Endothelial cell of umbilical vein (primary cell): ENCODE measurements at regions of chr3 and their contacts with region 1.

Region 1: GRCh38 chr3:46488735-46489361 is 8.9 kb upstream of the RTP3 start:
- DNase-seq: peak; percentile 84
- H3K4me3 ChIP-seq: no peak overlapping the region
- H3K27ac ChIP-seq: no peak overlapping the region
- H3K4me1 ChIP-seq: peaks cover 2% of the 10 kb centered on the region
- H3K27me3 ChIP-seq: peaks cover 2 to 7% of the 10 kb centered on the region in 2 experiments
- CTCF ChIP-seq: peak; percentile 99 to 100
- POLR2A ChIP-seq: no peak

Region 2: DNA sequence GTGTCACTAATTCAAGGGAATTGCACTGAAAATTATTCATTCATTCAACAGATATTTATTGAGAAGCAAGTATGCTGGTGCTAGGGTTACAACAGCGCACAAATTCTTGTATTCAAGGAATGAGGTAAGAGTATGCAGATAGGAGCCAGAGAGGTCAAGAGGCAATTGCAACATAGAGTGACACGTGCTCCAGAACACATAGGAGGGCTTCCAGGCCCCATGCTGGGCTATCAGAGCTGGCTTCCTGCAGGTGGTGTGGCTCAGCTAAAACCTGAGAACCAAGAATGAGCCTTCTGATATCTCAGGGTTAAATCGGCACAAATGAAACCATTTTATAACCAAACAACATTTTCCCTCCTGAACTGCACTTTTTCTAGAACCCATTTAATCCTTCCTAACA is 95.3 kb before region 1 on chr3:
- CTCF ChIA-PET with region 1: no interaction called
- POLR2A ChIA-PET with region 1: no interaction called
- dilution Hi-C with region 1: no loop called
- intact Hi-C with region 1: no loop called
- DNase-seq: no peak
- H3K4me3 ChIP-seq: no peak overlapping the region
- H3K27ac ChIP-seq: no peak overlapping the region
- H3K4me1 ChIP-seq: no peaks in the 10 kb centered on the region
- H3K27me3 ChIP-seq: no peaks in the 10 kb centered on the region
- CTCF ChIP-seq: no peak
- POLR2A ChIP-seq: no peak

Region 3: DNA sequence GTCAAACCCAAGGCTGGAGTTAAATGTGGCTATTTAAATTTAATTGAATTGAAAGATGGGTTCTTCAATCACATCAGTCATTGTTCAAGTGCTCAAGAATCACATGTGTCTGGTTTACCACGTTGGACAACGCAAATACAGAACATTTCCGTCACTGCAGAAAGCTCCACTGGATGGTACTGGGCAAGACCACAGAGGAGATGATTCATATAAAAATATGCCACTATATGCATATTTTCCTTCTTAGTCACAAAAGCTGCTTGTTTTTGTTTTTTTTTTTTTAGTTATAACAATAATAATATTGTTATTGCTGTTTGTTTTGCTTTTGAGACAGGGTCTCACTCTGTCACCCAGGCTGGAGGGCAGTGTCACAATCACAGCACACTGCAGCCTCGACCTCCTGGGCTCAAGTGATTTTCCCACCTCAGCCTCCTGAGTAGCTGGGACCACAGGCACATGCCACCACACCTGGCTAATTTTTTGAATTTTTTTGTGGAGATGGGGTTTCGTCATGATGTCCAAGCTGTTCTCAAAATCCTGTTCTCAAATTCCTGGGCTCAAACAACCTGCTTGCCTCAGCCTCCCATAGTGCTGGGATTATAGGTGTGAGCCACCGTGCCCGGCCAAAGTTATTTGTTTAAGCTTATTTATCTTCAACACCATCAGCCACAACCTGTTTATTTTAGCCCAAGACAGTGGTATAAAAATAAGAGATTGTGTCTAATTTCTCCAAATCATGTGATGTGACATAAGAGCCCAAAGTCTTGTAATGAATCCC is 28.4 kb after region 1 on chr3:
- CTCF ChIA-PET with region 1: interaction called, 52 read pairs
- POLR2A ChIA-PET with region 1: no interaction called
- dilution Hi-C with region 1: no loop called
- intact Hi-C with region 1: no loop called
- DNase-seq: peak; percentile 61
- H3K4me3 ChIP-seq: no peak overlapping the region
- H3K27ac ChIP-seq: peak overlapping the region; percentile 84
- H3K4me1 ChIP-seq: peaks cover 37% of the 10 kb centered on the region
- H3K27me3 ChIP-seq: no peaks in the 10 kb centered on the region
- CTCF ChIP-seq: no peak
- POLR2A ChIP-seq: no peak

Region 4: GRCh38 chr3:46558184-46559043 is 69.6 kb after region 1 on chr3:
- CTCF ChIA-PET with region 1: interaction called, 225 read pairs
- POLR2A ChIA-PET with region 1: interaction called, 5 read pairs
- dilution Hi-C with region 1: no loop called
- intact Hi-C with region 1: loop called (anchors 1 kb)
- DNase-seq: peak; percentile 84
- H3K4me3 ChIP-seq: peak overlapping the region; percentile 32 to 71 (median 34)
- H3K27ac ChIP-seq: peak overlapping the region; percentile 6
- H3K4me1 ChIP-seq: peaks cover 23% of the 10 kb centered on the region
- H3K27me3 ChIP-seq: no peaks in the 10 kb centered on the region
- CTCF ChIP-seq: peak; percentile 69 to 85
- POLR2A ChIP-seq: no peak

Region 5: GRCh38 chr3:46607603-46608028 is 118.8 kb after region 1 on chr3:
- CTCF ChIA-PET with region 1: interaction called, 14 read pairs
- POLR2A ChIA-PET with region 1: no interaction called
- dilution Hi-C with region 1: no loop called
- intact Hi-C with region 1: no loop called
- DNase-seq: no peak
- H3K4me3 ChIP-seq: no peak overlapping the region
- H3K27ac ChIP-seq: no peak overlapping the region
- H3K4me1 ChIP-seq: no peaks in the 10 kb centered on the region
- H3K27me3 ChIP-seq: peaks cover 3 to 5% of the 10 kb centered on the region in 2 experiments
- CTCF ChIP-seq: no peak
- POLR2A ChIP-seq: no peak

Region 6: GRCh38 chr3:46695177-46695961 is 206.5 kb after region 1 on chr3:
- CTCF ChIA-PET with region 1: interaction called, 22 read pairs
- POLR2A ChIA-PET with region 1: no interaction called
- dilution Hi-C with region 1: no loop called
- intact Hi-C with region 1: no loop called
- DNase-seq: peak; percentile 86
- H3K4me3 ChIP-seq: no peak overlapping the region
- H3K27ac ChIP-seq: peak overlapping the region; percentile 64
- H3K4me1 ChIP-seq: peaks cover 22% of the 10 kb centered on the region
- H3K27me3 ChIP-seq: no peaks in the 10 kb centered on the region
- CTCF ChIP-seq: peak; percentile 26 to 27
- POLR2A ChIP-seq: peak; percentile 28